Psoas muscle (tissue), 8 donors: ENCODE measurements at regions of chr17 and their contacts with region 1.

Region 1: GRCh38 chr17:80008383-80008840 is 27.3 kb downstream of the TBC1D16 start:
- DNase-seq: peak; percentile 83 to 89
- ATAC-seq: peak; percentile 70 to 92 (median 88)
- H3K4me3 ChIP-seq: no peak overlapping the region
- H3K27ac ChIP-seq: no peak overlapping the region
- H3K4me1 ChIP-seq: no peaks in the 10 kb centered on the region
- H3K27me3 ChIP-seq: peaks cover 0 to 3% (median 3%) of the 10 kb centered on the region in 3 donors
- CTCF ChIP-seq: peak; percentile 88

Region 2: DNA sequence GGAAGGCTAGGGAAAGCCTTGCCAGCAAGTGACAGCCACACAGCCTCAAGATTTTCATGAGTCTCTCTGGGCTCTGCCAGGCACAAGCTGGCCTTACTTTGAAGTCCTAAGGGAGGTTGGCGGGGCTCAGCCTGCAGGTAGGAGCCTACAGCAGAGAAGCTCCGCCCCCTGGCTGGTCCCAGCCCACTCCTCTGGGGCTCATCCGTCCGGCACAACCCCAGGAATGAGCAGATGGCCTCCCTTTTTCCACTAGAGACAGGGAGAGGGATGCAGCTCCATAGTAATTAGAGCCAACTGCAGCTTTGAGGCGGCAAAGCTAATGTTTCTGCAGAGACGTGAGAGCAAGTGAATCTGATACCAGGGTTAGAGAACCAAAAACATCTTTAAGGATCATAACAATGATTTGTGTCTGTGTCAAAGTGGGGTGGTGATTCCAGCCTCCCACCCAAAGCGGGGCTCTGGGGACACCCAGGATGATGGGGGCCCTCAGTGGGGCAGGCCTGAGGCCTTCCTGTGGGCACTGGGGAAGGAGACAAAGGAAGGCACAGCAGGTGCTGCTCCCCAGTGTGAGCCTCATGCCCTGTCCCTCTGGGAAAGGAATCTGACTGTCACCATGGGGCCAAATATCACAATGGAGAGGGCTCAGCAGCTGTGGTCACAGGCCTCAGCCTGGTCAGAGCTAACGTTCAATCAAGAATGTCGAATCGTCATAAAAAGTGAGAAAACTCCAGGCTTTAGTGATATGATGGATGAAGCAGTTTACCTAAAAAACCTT is 459.1 kb before region 1 on chr17:
- intact Hi-C with region 1: no loop called
- DNase-seq: peak in 1 of 2 donors; percentile 17
- ATAC-seq: no peak
- H3K4me3 ChIP-seq: no peak overlapping the region
- H3K27ac ChIP-seq: no peak overlapping the region
- H3K4me1 ChIP-seq: no peaks in the 10 kb centered on the region
- H3K27me3 ChIP-seq: peaks cover 0 to 27% (median 4%) of the 10 kb centered on the region in 3 donors
- CTCF ChIP-seq: no peak

Region 3: GRCh38 chr17:79970576-79971068 is 37.8 kb before region 1 on chr17:
- intact Hi-C with region 1: no loop called
- DNase-seq: no peak
- ATAC-seq: no peak
- H3K4me3 ChIP-seq: no peak overlapping the region
- H3K27ac ChIP-seq: no peak overlapping the region
- H3K4me1 ChIP-seq: no peaks in the 10 kb centered on the region
- H3K27me3 ChIP-seq: peaks cover 0 to 13% (median 0%) of the 10 kb centered on the region in 3 donors
- CTCF ChIP-seq: peak; percentile 33

Region 4: GRCh38 chr17:80082403-80083135 is 74.2 kb after region 1 on chr17:
- intact Hi-C with region 1: loop called in 1 of 2 experiments (anchors 5 kb)
- DNase-seq: peak; percentile 45 to 63
- ATAC-seq: peak; percentile 43 to 87 (median 69)
- H3K4me3 ChIP-seq: peak overlapping the region; percentile 40
- H3K27ac ChIP-seq: no peak overlapping the region
- H3K4me1 ChIP-seq: no peaks in the 10 kb centered on the region
- H3K27me3 ChIP-seq: peaks cover 0 to 3% (median 0%) of the 10 kb centered on the region in 3 donors
- CTCF ChIP-seq: peak; percentile 70